ENCODE measurements at regions of chr9 and their contacts with region 1.

Region 1: GRCh38 chr9:129761901-129762364 is 9.1 kb upstream of the PTGES start:
- DNase-seq: no peak
- ATAC-seq: peak; percentile 58
- H3K4me3 ChIP-seq: peak overlapping the region in 1 of 3 experiments; percentile 25; a peak in 1 of 6 replicates
- H3K27ac ChIP-seq: no peak overlapping the region
- H3K4me1 ChIP-seq: peaks cover 26% of the 10 kb centered on the region
- H3K27me3 ChIP-seq: peaks cover 2 to 12% of the 10 kb centered on the region in 2 experiments; a peak in 2 of 5 replicates
- CTCF ChIP-seq: no peak
- EP300 ChIP-seq: no peak
- POLR2A ChIP-seq: no peak
- RAD21 ChIP-seq: no peak

Region 2: DNA sequence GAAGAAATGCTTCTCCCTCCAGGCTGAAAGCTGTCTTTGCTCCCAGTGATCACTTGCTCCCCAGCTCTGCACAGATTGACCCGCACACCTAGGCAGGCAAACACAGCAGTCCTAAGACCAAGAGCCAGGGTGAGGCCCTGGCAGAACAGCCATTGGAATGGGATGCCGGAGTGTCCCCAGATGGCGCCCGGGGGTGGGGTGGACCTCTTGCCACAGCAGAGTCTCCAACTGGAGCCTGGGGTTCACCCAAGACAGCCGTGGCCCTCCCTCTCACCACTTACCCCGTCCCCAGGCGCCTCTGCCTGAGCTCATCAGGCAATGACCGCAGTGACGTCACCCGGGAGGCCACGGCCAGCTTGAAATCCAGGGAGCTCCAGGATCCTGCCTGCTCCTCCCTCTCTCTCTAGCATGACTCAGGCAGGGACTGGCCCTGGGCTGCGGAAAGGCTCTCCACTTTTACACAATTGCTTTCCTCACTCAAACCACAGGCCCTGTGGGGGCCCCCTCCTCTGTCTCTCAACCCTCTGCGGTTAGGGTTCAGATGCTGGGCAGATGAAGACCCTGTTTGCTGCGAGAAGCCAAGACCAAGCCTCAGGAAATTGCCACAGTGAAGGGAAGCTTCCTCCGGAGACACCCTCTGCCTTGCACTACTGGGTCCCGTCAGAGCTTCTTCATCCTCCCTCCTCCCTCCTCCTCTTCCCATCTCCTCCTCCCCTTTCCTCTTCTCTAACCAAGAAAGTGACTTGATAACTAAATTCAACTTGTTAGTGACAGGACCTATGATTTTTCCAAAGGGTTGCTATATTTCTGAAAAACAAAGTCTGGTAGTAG is 15.2 kb after region 1 on chr9:
- CTCF ChIA-PET with region 1: no interaction called
- POLR2A ChIA-PET with region 1: no interaction called
- in situ Hi-C with region 1: no loop called
- intact Hi-C with region 1: loop called (anchors 1 kb)
- DNase-seq: peak; percentile 67
- ATAC-seq: peak; percentile 78
- H3K4me3 ChIP-seq: peak overlapping the region in 1 of 3 experiments; percentile 2; a peak in 1 of 6 replicates
- H3K27ac ChIP-seq: no peak overlapping the region
- H3K4me1 ChIP-seq: peaks cover 25% of the 10 kb centered on the region
- H3K27me3 ChIP-seq: peaks cover 0 to 8% of the 10 kb centered on the region in 2 experiments; a peak in 4 of 5 replicates
- CTCF ChIP-seq: no peak
- EP300 ChIP-seq: no peak
- POLR2A ChIP-seq: no peak
- RAD21 ChIP-seq: no peak

Region 3: DNA sequence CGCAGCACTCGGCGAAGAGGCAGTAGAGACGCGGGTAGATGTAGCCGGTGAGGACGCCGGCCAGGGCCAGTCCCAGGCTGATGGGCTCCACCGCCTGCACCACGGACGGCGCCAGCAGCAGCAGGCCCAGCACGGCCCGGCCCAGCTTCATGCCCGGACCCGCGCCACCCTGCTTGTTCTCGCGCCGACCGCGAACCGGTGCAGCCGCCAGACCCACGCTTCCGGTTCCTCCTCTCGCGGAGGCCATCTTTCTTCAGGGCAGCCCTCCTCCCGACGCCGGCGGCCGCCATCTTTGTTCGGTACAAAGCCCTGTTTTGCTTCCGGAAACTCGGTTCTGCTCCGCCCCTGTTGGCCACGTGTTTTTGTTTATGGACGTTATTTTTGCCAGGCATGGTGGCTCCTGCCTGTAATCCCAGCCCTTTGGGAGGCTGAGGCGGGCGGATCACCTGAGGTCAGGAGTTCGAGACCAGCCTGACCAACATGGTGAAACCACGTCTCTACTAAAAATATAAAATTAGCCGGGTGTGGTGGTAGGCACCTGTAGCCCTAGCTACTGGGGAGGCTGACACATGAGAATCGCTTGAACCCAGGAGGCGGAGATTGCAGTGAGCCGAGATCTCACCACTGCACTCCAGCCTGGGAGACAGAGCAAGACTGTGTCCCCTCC is 62.1 kb after region 1 on chr9 and contains the start of gene TOR1A:
- CTCF ChIA-PET with region 1: no interaction called
- POLR2A ChIA-PET with region 1: no interaction called
- in situ Hi-C with region 1: no loop called
- intact Hi-C with region 1: no loop called
- DNase-seq: peak; percentile 92
- ATAC-seq: peak; percentile 95
- H3K4me3 ChIP-seq: peak within 1 kb of the TSS; percentile 78 to 90 (median 83)
- H3K27ac ChIP-seq: peak within 1 kb of the TSS; percentile 72
- H3K4me1 ChIP-seq: peaks cover 7% of the 10 kb centered on the region
- H3K27me3 ChIP-seq: no peaks in the 10 kb centered on the region
- CTCF ChIP-seq: 0 out of 2 replicates have a peak, but pooled peaks have one; percentile 2
- EP300 ChIP-seq: no peak
- POLR2A ChIP-seq: peak; percentile 77 to 93
- RAD21 ChIP-seq: peak; percentile 36
- total RNA-seq, gene TOR1A: 18.6 and 31.6 TPM in 2 replicates

Measured in HepG2 (cell line).